ENCODE measurements at regions of chr3 and their contacts with region 1.

Region 1: DNA sequence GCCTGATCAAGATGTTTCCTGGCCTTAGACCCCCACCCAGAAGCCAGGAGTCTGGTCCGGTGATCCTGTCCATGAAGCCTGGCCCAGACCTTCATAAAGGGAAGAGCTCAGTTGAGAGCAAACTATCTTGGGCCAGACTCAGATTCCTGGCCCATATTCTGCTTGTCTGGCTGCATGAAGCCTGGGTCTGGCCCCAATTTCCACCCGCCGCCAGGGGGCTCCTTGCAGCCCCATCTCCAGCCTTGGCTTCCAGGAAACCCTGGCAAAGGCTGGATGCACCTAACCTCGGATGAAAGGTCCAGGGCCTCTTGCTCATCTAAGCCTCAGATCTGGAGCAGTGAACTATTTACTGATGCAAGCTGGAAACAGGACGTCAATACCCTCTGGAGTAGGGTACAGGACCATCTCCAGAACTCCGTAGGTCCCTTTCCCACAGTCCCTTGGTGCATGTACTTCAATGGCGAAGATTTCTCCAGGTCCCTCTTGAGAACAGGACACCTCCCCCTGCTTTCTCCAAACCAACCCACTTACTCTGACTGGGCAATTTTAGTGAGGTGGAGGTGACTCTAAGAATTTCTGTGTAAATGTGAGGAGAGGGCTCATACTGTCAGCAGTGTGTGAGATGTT is 5.6 kb downstream of the FOXL2 start:
- DNase-seq: peak; percentile 74
- H3K4me3 ChIP-seq: no peak overlapping the region; a peak in 1 of 4 replicates
- H3K27ac ChIP-seq: no peak overlapping the region
- H3K4me1 ChIP-seq: peaks cover 0 to 6% of the 10 kb centered on the region in 2 experiments; a peak in 2 of 4 replicates
- H3K27me3 ChIP-seq: peaks cover 97% of the 10 kb centered on the region
- CTCF ChIP-seq: peak; percentile 59
- EP300 ChIP-seq: no peak
- RAD21 ChIP-seq: peak; percentile 27; the same call in 1 of the 2 replicates

Region 2: GRCh38 chr3:138928727-138929385 is 12.5 kb before region 1 on chr3:
- CTCF ChIA-PET with region 1: interaction called, 43 read pairs
- POLR2A ChIA-PET with region 1: no interaction called
- DNase-seq: no peak
- H3K4me3 ChIP-seq: no peak overlapping the region
- H3K27ac ChIP-seq: no peak overlapping the region
- H3K4me1 ChIP-seq: no peaks in the 10 kb centered on the region
- H3K27me3 ChIP-seq: peaks cover 19% of the 10 kb centered on the region; the same call in 1 of the 2 replicates
- CTCF ChIP-seq: no peak
- EP300 ChIP-seq: no peak
- RAD21 ChIP-seq: no peak

Region 3: GRCh38 chr3:139062915-139063314 is 121.5 kb after region 1 on chr3:
- CTCF ChIA-PET with region 1: no interaction called
- POLR2A ChIA-PET with region 1: no interaction called
- DNase-seq: no peak
- H3K4me3 ChIP-seq: no peak overlapping the region
- H3K27ac ChIP-seq: no peak overlapping the region
- H3K4me1 ChIP-seq: no peaks in the 10 kb centered on the region
- H3K27me3 ChIP-seq: no peaks in the 10 kb centered on the region
- CTCF ChIP-seq: no peak
- EP300 ChIP-seq: no peak
- RAD21 ChIP-seq: no peak

Measured in SK-N-SH (cell line).